ENCODE measurements at regions of chr11 and their contacts with region 1.

Region 1: GRCh38 chr11:17276236-17277023 is at the start of gene NUCB2:
- DNase-seq: peak; percentile 96
- H3K4me3 Mint-ChIP-seq: peak within 1 kb of the TSS; percentile 67
- H3K27ac Mint-ChIP-seq: peak within 1 kb of the TSS; percentile 53
- H3K4me1 Mint-ChIP-seq: peaks cover 36% of the 10 kb centered on the region
- H3K27me3 Mint-ChIP-seq: peaks cover 21% of the 10 kb centered on the region
- total RNA-seq, gene NUCB2: 82.0 to 91.8 TPM

Region 2: DNA sequence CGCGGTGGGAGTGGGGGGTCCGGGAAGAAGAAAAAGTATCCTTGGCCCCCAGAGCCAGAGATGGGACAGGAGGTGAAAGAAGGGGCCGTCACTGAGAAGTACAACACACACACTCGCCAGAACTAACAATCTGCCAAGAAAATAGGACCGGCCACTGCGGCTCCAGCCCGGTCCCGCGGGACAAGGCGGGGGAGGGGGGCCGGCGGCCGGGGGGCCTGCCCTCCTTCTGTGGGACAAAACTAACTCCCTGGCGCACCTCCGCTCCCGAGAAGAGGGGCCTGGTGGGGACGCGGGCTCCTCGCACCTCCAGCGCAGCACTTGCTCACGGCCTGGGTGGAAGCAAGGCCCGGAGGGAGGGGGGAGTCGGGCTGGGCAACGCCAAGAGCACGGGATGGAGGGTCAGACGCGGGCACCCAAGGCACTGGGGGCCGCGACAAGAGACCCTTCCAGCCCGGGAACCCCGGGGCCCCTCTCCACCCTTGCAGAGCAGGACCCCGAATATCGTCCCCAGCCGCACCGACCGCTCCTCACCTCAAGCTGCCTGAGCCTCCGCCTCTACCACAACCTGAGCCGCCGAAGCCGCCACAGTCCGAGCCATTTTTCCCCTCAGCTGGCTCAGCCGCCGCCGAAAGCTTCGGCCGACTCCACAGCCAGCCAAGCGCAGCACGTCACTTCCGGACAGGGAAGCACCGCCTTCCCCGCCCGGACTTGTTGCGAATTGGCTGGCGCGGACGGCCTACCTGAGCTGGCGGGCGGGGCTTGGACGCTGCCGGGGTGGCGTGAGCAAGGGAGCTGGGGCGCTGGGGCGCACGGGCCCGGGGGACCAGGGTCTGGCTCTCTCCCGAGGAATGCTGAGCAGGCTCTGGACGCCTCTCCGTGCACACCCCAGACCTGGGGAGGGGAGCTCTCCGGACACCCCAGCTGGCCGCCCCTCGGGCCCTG is 68.8 kb before region 1 on chr11 and contains the start of gene PIK3C2A:
- CTCF ChIA-PET with region 1: no interaction called
- POLR2A ChIA-PET with region 1: interaction called, 14 read pairs
- DNase-seq: peak; percentile 96
- H3K4me3 Mint-ChIP-seq: peak within 1 kb of the TSS; percentile 99
- H3K27ac Mint-ChIP-seq: peak within 1 kb of the TSS; percentile 90
- H3K4me1 Mint-ChIP-seq: peaks cover 31% of the 10 kb centered on the region
- H3K27me3 Mint-ChIP-seq: no peaks in the 10 kb centered on the region
- total RNA-seq, gene PIK3C2A: 23.7 to 24.9 TPM

Region 3: GRCh38 chr11:17287058-17287457 is 10.6 kb after region 1 on chr11:
- CTCF ChIA-PET with region 1: interaction called, 3 read pairs
- POLR2A ChIA-PET with region 1: interaction called, 33 read pairs
- DNase-seq: no peak
- H3K4me3 Mint-ChIP-seq: no peak overlapping the region
- H3K27ac Mint-ChIP-seq: no peak overlapping the region
- H3K4me1 Mint-ChIP-seq: peaks cover 25% of the 10 kb centered on the region
- H3K27me3 Mint-ChIP-seq: no peaks in the 10 kb centered on the region

Measured in activated CD4-positive, alpha-beta memory T cell treated with anti-CD3 and anti-CD28 coated beads, Interleukin-2, amount 10 ng/mL, durations not matched to agents 7 days and 5 days (primary cell).